ENCODE measurements at regions of chr4 and their contacts with region 1.

Region 1: DNA sequence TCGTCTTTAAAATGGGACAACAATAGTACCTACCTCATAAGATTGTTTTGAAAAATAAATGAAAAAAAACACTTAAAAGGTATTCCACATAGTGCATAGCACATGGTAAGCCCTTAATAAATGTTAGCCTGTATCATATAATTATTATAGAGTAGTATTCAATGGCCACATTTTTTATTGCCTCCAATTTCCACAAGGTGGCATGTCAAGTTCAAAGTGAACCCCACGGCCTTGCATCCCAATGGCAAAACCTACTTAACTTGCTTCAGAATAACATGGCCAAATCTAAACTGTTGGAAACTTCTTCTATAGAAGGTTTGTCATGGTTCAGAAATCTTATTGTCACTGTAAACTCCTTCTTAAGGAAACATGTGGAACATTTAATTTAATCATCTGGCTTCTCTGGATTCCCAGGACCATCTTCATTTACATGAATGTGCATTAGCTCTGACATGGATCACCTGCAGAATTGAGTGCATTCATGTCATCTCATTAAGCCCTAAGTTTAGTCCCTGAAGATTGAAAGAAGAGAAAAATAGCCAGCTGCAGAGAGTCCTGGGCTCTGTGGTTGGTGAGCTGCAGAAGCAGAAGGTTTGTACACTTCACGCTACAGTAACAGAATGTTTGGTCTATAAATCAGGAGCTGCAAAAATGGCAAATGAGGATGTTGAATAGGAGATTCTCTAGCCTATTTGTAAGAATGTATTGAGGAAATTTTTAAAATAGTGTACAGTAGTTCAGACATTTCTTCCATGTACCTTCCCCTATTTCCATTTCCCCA is 61.0 kb downstream of the ANXA3 start:
- DNase-seq: peak; percentile 35
- H3K4me3 ChIP-seq: no peak overlapping the region
- H3K27ac ChIP-seq: no peak overlapping the region
- H3K4me1 ChIP-seq: peaks cover 0 to 9% of the 10 kb centered on the region in 2 experiments; a peak in 1 of 4 replicates
- H3K27me3 ChIP-seq: no peaks in the 10 kb centered on the region
- CTCF ChIP-seq: peak; percentile 81
- EP300 ChIP-seq: no peak
- RAD21 ChIP-seq: peak; percentile 87

Region 2: GRCh38 chr4:78592104-78592783 is 20.3 kb before region 1 on chr4:
- CTCF ChIA-PET with region 1: no interaction called
- POLR2A ChIA-PET with region 1: no interaction called
- DNase-seq: peak; percentile 3
- H3K4me3 ChIP-seq: no peak overlapping the region
- H3K27ac ChIP-seq: no peak overlapping the region
- H3K4me1 ChIP-seq: no peaks in the 10 kb centered on the region
- H3K27me3 ChIP-seq: no peaks in the 10 kb centered on the region
- CTCF ChIP-seq: peak; percentile 44
- EP300 ChIP-seq: no peak
- RAD21 ChIP-seq: no peak

Region 3: DNA sequence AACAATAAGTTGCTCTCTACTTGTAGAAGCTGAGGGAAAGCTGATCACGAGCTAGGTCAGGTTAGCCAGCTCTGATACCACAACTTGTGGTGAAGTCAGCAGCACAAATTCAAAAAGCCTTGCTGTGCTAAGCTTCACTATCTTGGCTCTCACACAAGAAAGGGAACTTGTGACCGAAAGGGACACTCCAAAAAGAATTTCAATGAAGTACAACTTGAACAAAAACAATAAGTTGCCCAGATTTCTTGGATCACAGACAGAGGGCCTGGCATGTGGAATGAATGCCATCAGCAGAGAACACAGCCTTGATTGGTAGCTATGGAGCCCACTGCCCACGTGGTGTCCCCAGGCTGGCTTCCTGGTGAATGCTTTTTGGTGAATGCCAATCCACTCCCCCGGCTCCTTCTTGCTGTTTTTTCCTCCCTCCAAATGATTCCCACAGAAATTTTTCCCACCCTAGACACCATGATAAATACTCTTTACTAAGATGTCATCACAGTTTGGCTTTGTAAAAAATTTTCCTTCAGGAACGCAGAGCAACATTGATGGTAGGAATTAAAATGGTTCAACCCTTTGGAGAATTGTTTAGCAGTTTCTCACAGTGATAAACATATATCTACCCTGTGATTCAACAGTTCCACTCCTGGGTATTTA is 21.6 kb after region 1 on chr4:
- CTCF ChIA-PET with region 1: interaction called, 17 read pairs
- POLR2A ChIA-PET with region 1: no interaction called
- DNase-seq: no peak
- H3K4me3 ChIP-seq: no peak overlapping the region
- H3K27ac ChIP-seq: no peak overlapping the region
- H3K4me1 ChIP-seq: peaks cover 0 to 15% of the 10 kb centered on the region in 2 experiments; a peak in 1 of 4 replicates
- H3K27me3 ChIP-seq: no peaks in the 10 kb centered on the region
- CTCF ChIP-seq: no peak
- EP300 ChIP-seq: no peak
- RAD21 ChIP-seq: no peak